ENCODE measurements at regions of chr19 and their contacts with region 1.

Region 1: DNA sequence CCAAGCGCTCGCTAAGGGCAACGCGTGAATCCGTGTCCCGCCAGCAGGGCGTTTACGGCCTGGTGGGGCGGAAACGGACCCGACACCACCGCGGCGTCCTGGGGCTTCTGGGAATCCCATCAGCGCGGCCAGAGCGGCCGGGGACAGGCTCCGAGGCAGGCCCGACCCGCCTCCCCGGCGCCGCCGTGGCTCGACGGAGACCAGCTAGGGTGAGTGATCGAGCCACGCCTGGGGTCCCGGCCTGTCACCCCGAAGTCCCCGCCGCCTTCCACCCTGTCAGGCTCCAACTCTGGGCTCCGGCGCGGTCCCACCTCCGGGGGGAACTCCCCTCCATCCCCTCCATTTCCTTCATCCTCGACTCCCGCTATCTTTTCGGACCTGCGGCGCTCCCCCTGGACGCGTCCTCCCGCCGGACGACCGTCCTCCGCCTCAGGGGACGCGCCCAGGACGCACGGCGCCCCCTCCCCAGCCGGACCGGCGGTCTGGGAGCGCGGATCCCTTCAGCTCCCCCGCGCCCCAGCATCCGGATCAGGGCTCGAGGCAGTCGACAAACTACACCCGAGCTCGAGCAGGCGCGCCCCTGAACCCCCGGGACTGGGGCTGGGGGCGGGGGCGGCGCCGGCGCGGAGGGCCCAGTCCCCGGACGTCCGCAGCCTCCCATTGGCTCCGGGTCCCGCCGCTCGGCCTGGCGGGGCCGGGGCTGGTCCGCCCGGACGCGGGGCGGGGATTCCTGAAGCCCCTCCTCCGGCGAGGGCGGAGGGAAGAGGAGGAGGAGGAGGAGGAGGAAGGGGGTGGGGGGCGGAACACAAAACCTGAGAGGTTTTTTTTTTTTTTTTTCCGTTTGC is 638 bp upstream of the BICRA start:
- DNase-seq: peak; percentile 91 to 99 (median 96)
- ATAC-seq: peak; percentile 96
- H3K4me3 ChIP-seq: peak overlapping the region; percentile 79
- H3K4me3 Mint-ChIP-seq: peak overlapping the region; percentile 70 to 95 (median 86)
- H3K27ac ChIP-seq: peak overlapping the region; percentile 96
- H3K27ac Mint-ChIP-seq: peak overlapping the region; percentile 61 to 92 (median 88)
- H3K4me1 ChIP-seq: peaks cover 16 to 22% of the 10 kb centered on the region in 2 donors
- H3K4me1 Mint-ChIP-seq: peaks cover 12 to 36% (median 28%) of the 10 kb centered on the region in 7 donors
- H3K27me3 ChIP-seq: no peaks in the 10 kb centered on the region
- H3K27me3 Mint-ChIP-seq: peaks cover 0 to 2% (median 0%) of the 10 kb centered on the region in 5 donors

Region 2: GRCh38 chr19:47348819-47349795 is 259.2 kb before region 1 on chr19 and contains the start of gene DHX34:
- CTCF ChIA-PET with region 1: no interaction called
- POLR2A ChIA-PET with region 1: no interaction called
- intact Hi-C with region 1: loop called in 1 of 2 experiments (anchors 1 kb)
- DNase-seq: peak; percentile 97 to 100 (median 99)
- ATAC-seq: peak; percentile 100
- H3K4me3 ChIP-seq: peak within 1 kb of the TSS; percentile 92
- H3K4me3 Mint-ChIP-seq: peak within 1 kb of the TSS; percentile 91 to 100 (median 97)
- H3K27ac ChIP-seq: peak within 1 kb of the TSS; percentile 83
- H3K27ac Mint-ChIP-seq: peak within 1 kb of the TSS; percentile 88 to 97 (median 95)
- H3K4me1 ChIP-seq: peaks cover 0 to 12% of the 10 kb centered on the region in 2 donors
- H3K4me1 Mint-ChIP-seq: peaks cover 19 to 46% (median 44%) of the 10 kb centered on the region in 7 donors
- H3K27me3 ChIP-seq: no peaks in the 10 kb centered on the region
- H3K27me3 Mint-ChIP-seq: peaks cover 0 to 3% (median 0%) of the 10 kb centered on the region in 5 donors
- total RNA-seq, gene DHX34: 15.6 to 31.6 (median 29.5) TPM

Region 3: GRCh38 chr19:47436712-47437401 is 171.4 kb before region 1 on chr19:
- CTCF ChIA-PET with region 1: interaction called, 5 read pairs
- POLR2A ChIA-PET with region 1: interaction called, 4 read pairs
- intact Hi-C with region 1: loop called in 1 of 2 experiments (anchors 2 kb)
- DNase-seq: peak; percentile 67 to 91 (median 79)
- ATAC-seq: peak; percentile 98
- H3K4me3 ChIP-seq: no peak overlapping the region
- H3K4me3 Mint-ChIP-seq: peak overlapping the region in 8 of 10 donors; percentile 17 to 72 (median 36)
- H3K27ac ChIP-seq: no peak overlapping the region
- H3K27ac Mint-ChIP-seq: peak overlapping the region in 6 of 9 donors; percentile 12 to 87 (median 55)
- H3K4me1 ChIP-seq: no peaks in the 10 kb centered on the region
- H3K4me1 Mint-ChIP-seq: peaks cover 18 to 32% (median 20%) of the 10 kb centered on the region in 7 donors
- H3K27me3 ChIP-seq: no peaks in the 10 kb centered on the region
- H3K27me3 Mint-ChIP-seq: peaks cover 21 to 55% (median 45%) of the 10 kb centered on the region in 5 donors

Region 4: GRCh38 chr19:47483800-47484690 is 124.3 kb before region 1 on chr19 and contains the start of gene KPTN:
- CTCF ChIA-PET with region 1: interaction called, 4 read pairs
- POLR2A ChIA-PET with region 1: interaction called, 9 read pairs
- intact Hi-C with region 1: loop called in 1 of 2 experiments (anchors 1 kb)
- DNase-seq: peak; percentile 85 to 92 (median 88)
- ATAC-seq: peak; percentile 91
- H3K4me3 ChIP-seq: peak within 1 kb of the TSS; percentile 74
- H3K4me3 Mint-ChIP-seq: peak within 1 kb of the TSS; percentile 83 to 99 (median 96)
- H3K27ac ChIP-seq: peak within 1 kb of the TSS; percentile 96
- H3K27ac Mint-ChIP-seq: peak within 1 kb of the TSS; percentile 94 to 99 (median 97)
- H3K4me1 ChIP-seq: peaks cover 18% of the 10 kb centered on the region in 2 donors
- H3K4me1 Mint-ChIP-seq: peaks cover 22 to 39% (median 30%) of the 10 kb centered on the region in 7 donors
- H3K27me3 ChIP-seq: no peaks in the 10 kb centered on the region
- H3K27me3 Mint-ChIP-seq: peaks cover 0 to 4% (median 0%) of the 10 kb centered on the region in 5 donors
- total RNA-seq, gene KPTN: 5.1 to 9.2 (median 6.7) TPM

Region 5: DNA sequence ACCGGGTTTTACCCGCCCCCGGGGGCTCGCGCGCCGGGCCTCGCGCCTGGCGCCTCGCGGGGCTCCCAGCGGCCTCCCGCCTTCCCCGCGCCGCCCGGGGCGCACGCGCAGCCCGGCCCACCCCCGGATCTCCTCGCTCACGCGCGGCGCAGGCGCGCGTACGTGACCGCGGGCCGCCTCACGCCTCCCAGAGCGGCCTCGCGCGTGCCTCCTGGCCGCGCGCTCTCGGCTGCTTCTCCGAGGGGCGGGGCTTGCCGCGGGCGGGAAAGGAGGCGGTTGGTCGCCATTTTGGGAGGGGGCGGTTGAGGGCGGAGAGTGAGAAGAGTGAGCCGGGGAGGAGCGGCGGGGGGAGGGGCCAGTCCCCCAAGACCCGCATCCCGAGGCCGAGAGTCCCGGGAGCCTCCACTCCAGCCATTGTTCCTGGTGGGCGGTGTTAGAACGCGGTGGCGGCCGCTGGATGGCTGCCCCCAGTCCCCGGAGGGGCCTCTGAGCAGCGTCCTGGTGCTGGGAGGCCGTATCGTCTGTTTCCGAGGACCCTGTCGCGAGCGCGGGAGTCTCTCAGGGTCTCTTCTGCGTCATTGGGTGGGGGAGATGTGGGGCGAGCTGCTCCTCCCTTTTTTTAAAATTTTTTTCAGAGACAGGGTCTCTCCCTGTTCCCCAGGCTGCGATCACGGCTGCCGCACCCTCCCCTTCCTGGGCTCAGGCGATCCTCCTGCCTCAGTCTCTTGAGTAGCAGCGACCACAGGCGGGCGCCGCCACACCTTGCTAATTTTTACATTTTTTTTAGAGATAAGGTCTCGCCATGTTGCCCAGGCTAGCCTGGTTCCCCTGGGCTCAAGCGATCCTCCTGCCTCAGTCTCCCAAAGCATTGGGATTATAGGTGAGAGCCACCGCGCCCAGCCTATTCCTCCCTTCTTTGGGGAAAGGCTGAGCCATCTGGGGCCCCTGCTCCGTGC is 34.9 kb before region 1 on chr19 and contains the start of gene ZNF541:
- CTCF ChIA-PET with region 1: interaction called, 3 read pairs
- POLR2A ChIA-PET with region 1: interaction called, 8 read pairs
- intact Hi-C with region 1: loop called (anchors 1 kb)
- DNase-seq: peak; percentile 72 to 91 (median 86)
- ATAC-seq: peak; percentile 97
- H3K4me3 ChIP-seq: peak within 1 kb of the TSS; percentile 54
- H3K4me3 Mint-ChIP-seq: peak within 1 kb of the TSS; percentile 44 to 82 (median 73)
- H3K27ac ChIP-seq: peak within 1 kb of the TSS; percentile 69
- H3K27ac Mint-ChIP-seq: peak within 1 kb of the TSS; percentile 17 to 88 (median 59)
- H3K4me1 ChIP-seq: peaks cover 13 to 17% of the 10 kb centered on the region in 2 donors
- H3K4me1 Mint-ChIP-seq: peaks cover 22 to 56% (median 40%) of the 10 kb centered on the region in 7 donors
- H3K27me3 ChIP-seq: no peaks in the 10 kb centered on the region
- H3K27me3 Mint-ChIP-seq: peaks cover 0 to 36% (median 0%) of the 10 kb centered on the region in 5 donors
- total RNA-seq, gene ZNF541: 0.36 to 1.5 (median 0.95) TPM

Region 6: GRCh38 chr19:47680858-47681332 is 72.6 kb after region 1 on chr19:
- CTCF ChIA-PET with region 1: no interaction called
- POLR2A ChIA-PET with region 1: no interaction called
- intact Hi-C with region 1: no loop called
- DNase-seq: no peak
- ATAC-seq: no peak
- H3K4me3 ChIP-seq: no peak overlapping the region
- H3K4me3 Mint-ChIP-seq: no peak overlapping the region
- H3K27ac ChIP-seq: no peak overlapping the region
- H3K27ac Mint-ChIP-seq: peak overlapping the region in 1 of 9 donors; percentile 68
- H3K4me1 ChIP-seq: no peaks in the 10 kb centered on the region
- H3K4me1 Mint-ChIP-seq: peaks cover 0 to 7% (median 6%) of the 10 kb centered on the region in 7 donors
- H3K27me3 ChIP-seq: no peaks in the 10 kb centered on the region
- H3K27me3 Mint-ChIP-seq: no peaks in the 10 kb centered on the region

Region 7: GRCh38 chr19:47697863-47698609 is 89.7 kb after region 1 on chr19:
- CTCF ChIA-PET with region 1: interaction called, 3 read pairs
- POLR2A ChIA-PET with region 1: interaction called, 3 read pairs
- intact Hi-C with region 1: loop called (anchors 2 to 5 kb)
- DNase-seq: peak; percentile 10 to 59 (median 41)
- ATAC-seq: peak; percentile 76
- H3K4me3 ChIP-seq: no peak overlapping the region
- H3K4me3 Mint-ChIP-seq: no peak overlapping the region
- H3K27ac ChIP-seq: no peak overlapping the region
- H3K27ac Mint-ChIP-seq: peak overlapping the region in 2 of 9 donors; percentile 9 to 12
- H3K4me1 ChIP-seq: no peaks in the 10 kb centered on the region
- H3K4me1 Mint-ChIP-seq: peaks cover 0 to 6% (median 3%) of the 10 kb centered on the region in 7 donors
- H3K27me3 ChIP-seq: no peaks in the 10 kb centered on the region
- H3K27me3 Mint-ChIP-seq: no peaks in the 10 kb centered on the region

Region 8: GRCh38 chr19:47778089-47778953 is 170.0 kb after region 1 on chr19 and contains the start of gene SELENOW:
- CTCF ChIA-PET with region 1: no interaction called
- POLR2A ChIA-PET with region 1: interaction called, 5 read pairs
- intact Hi-C with region 1: loop called in 1 of 2 experiments (anchors 1 kb)
- DNase-seq: peak; percentile 56 to 86 (median 76)
- ATAC-seq: peak; percentile 95
- H3K4me3 ChIP-seq: peak within 1 kb of the TSS; percentile 88
- H3K4me3 Mint-ChIP-seq: peak within 1 kb of the TSS; percentile 84 to 99 (median 93)
- H3K27ac ChIP-seq: peak within 1 kb of the TSS; percentile 87
- H3K27ac Mint-ChIP-seq: peak within 1 kb of the TSS; percentile 70 to 96 (median 91)
- H3K4me1 ChIP-seq: peaks cover 8 to 19% of the 10 kb centered on the region in 2 donors
- H3K4me1 Mint-ChIP-seq: peaks cover 8 to 40% (median 32%) of the 10 kb centered on the region in 7 donors
- H3K27me3 ChIP-seq: no peaks in the 10 kb centered on the region
- H3K27me3 Mint-ChIP-seq: no peaks in the 10 kb centered on the region
- total RNA-seq, gene SELENOW: 67.5 to 116 (median 101) TPM

Region 9: DNA sequence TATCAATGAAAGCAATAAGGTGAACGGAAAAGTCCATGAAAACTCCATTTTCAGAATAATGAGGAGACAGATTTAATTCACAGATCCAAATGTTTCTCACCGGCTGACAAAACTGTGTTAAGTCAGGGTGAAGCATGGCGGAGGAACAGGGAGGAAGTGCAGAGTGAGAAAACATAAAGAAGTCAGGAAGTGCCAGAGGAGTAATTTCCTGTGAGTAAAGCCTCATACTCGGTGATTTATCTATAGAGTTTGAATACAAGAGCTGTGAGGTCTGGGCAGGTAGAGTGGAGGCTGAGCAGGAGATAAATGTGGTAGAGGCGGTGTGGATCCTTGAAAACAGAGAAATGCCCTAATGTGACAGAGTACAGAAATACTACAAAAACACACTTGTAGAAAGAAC is 636.0 kb after region 1 on chr19:
- CTCF ChIA-PET with region 1: no interaction called
- POLR2A ChIA-PET with region 1: no interaction called
- intact Hi-C with region 1: no loop called
- DNase-seq: peak in 7 of 9 donors; percentile 37 to 61 (median 56)
- ATAC-seq: peak; percentile 95
- H3K4me3 ChIP-seq: peak overlapping the region; percentile 19
- H3K4me3 Mint-ChIP-seq: peak overlapping the region; percentile 75 to 91 (median 79)
- H3K27ac ChIP-seq: peak overlapping the region; percentile 63
- H3K27ac Mint-ChIP-seq: peak overlapping the region; percentile 77 to 93 (median 90)
- H3K4me1 ChIP-seq: peaks cover 25 to 39% of the 10 kb centered on the region in 2 donors
- H3K4me1 Mint-ChIP-seq: peaks cover 37 to 67% (median 52%) of the 10 kb centered on the region in 7 donors
- H3K27me3 ChIP-seq: no peaks in the 10 kb centered on the region
- H3K27me3 Mint-ChIP-seq: no peaks in the 10 kb centered on the region

Measured in naive thymus-derived CD4-positive, alpha-beta T cell (primary cell).